ENCODE measurements at regions of chr3 and their contacts with region 1.

Region 1: DNA sequence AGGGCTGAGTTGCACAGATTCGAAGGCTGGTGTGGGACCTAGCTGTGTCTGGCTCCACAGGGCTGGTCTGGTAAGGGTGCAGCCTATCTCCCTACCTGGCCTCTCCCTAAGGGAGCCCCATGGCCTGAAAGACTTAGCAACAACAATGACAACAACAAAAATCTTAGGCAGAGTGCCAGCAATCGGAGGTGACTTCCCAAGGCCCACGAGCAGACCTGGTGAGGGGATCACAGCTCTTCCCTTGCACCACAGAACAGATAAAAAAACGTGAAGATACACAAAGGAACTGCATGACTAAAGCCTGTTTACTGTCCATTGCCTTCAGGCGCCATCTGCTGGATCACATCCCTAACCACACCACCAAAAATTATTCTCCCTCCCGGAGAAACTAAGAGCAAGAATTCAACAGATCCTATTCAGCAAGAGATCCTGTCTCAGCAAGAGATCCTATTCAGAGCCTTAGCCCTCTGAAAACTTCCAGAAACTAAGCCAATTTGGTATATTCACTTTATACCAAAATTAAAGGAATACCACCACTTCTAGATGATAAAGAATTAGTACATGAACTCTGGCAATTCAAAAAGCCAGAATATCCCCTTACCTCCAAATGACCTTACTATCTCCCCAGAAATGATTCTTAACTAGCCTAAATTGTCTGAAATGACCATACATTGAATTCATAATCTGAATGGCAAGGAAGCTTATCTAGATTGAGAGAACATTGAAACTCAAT is 24.1 kb upstream of the OR5K4 start:
- DNase-seq: peak in 1 of 2 experiments; percentile 71
- H3K4me3 ChIP-seq: no peak overlapping the region
- H3K27ac ChIP-seq: 0 out of 2 replicates have a peak overlapping the region, but pooled peaks have one; percentile 48
- H3K4me1 ChIP-seq: peaks cover 9 to 24% (median 14%) of the 10 kb centered on the region in 4 experiments
- H3K27me3 ChIP-seq: no peaks in the 10 kb centered on the region
- CTCF ChIP-seq: peak; percentile 15 to 91 (median 87)
- EP300 ChIP-seq: no peak
- POLR2A ChIP-seq: no peak
- RAD21 ChIP-seq: peak; percentile 95 to 96

Region 2: DNA sequence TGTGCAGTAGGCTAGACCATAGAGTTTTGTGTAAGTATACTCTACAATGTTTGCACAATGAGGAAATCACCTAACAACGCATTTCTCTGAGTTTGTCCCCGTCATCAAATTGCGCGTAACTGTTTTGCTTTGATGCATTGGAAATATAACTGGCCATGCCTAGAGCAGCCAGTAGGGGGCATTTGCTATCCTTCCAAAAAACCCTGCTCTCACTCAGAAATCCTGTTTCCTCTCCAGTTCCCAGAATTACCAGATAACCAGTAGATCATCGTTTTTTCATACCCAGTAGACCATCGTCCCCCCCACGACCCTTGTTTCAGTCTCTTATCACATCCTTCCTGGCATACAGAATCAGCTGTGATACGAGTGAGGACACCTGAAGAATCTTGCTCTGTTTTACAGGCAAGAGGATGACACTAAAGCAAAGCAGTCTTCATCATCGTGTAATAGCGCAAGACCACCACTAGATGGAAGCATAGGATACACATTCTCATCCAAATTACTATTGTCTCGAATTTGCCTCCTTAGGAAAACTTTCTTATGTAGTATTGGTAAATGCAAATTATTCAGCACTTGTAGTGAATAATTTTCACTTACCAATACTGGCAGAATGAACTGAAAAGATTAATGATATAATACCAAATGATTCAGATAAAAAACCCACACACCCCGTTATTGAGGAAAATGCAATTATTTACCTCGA is 290.1 kb before region 1 on chr3:
- CTCF ChIA-PET with region 1: interaction called, 97 read pairs
- POLR2A ChIA-PET with region 1: interaction called, 4 read pairs
- DNase-seq: peak; percentile 17 to 81
- H3K4me3 ChIP-seq: peak overlapping the region; percentile 28 to 70 (median 48); a peak in 5 of 8 replicates
- H3K27ac ChIP-seq: no peak overlapping the region
- H3K4me1 ChIP-seq: no peaks in the 10 kb centered on the region
- H3K27me3 ChIP-seq: no peaks in the 10 kb centered on the region
- CTCF ChIP-seq: peak in 2 of 3 experiments; percentile 66 to 73; a peak in 3 of 4 replicates
- EP300 ChIP-seq: no peak
- POLR2A ChIP-seq: no peak
- RAD21 ChIP-seq: peak; percentile 83 to 88

Region 3: GRCh38 chr3:98058244-98058960 is 271.2 kb before region 1 on chr3:
- CTCF ChIA-PET with region 1: interaction called, 11 read pairs
- POLR2A ChIA-PET with region 1: no interaction called
- DNase-seq: no peak
- H3K4me3 ChIP-seq: no peak overlapping the region
- H3K27ac ChIP-seq: no peak overlapping the region
- H3K4me1 ChIP-seq: no peaks in the 10 kb centered on the region
- H3K27me3 ChIP-seq: no peaks in the 10 kb centered on the region
- CTCF ChIP-seq: no peak
- EP300 ChIP-seq: no peak
- POLR2A ChIP-seq: no peak
- RAD21 ChIP-seq: no peak

Region 4: GRCh38 chr3:98291332-98291957 is 38.1 kb before region 1 on chr3:
- CTCF ChIA-PET with region 1: interaction called, 11 read pairs
- POLR2A ChIA-PET with region 1: interaction called, 3 read pairs
- DNase-seq: no peak
- H3K4me3 ChIP-seq: no peak overlapping the region
- H3K27ac ChIP-seq: no peak overlapping the region
- H3K4me1 ChIP-seq: no peaks in the 10 kb centered on the region
- H3K27me3 ChIP-seq: no peaks in the 10 kb centered on the region
- CTCF ChIP-seq: no peak
- EP300 ChIP-seq: no peak
- POLR2A ChIP-seq: no peak
- RAD21 ChIP-seq: no peak

Region 5: GRCh38 chr3:98433764-98434163 is 104.2 kb after region 1 on chr3:
- CTCF ChIA-PET with region 1: no interaction called
- POLR2A ChIA-PET with region 1: no interaction called
- DNase-seq: no peak
- H3K4me3 ChIP-seq: no peak overlapping the region
- H3K27ac ChIP-seq: no peak overlapping the region
- H3K4me1 ChIP-seq: no peaks in the 10 kb centered on the region
- H3K27me3 ChIP-seq: no peaks in the 10 kb centered on the region
- CTCF ChIP-seq: no peak
- EP300 ChIP-seq: no peak
- POLR2A ChIP-seq: no peak
- RAD21 ChIP-seq: no peak